PC-9 (cell line): ENCODE measurements at regions of chr13 and their contacts with region 1.

Region 1: DNA sequence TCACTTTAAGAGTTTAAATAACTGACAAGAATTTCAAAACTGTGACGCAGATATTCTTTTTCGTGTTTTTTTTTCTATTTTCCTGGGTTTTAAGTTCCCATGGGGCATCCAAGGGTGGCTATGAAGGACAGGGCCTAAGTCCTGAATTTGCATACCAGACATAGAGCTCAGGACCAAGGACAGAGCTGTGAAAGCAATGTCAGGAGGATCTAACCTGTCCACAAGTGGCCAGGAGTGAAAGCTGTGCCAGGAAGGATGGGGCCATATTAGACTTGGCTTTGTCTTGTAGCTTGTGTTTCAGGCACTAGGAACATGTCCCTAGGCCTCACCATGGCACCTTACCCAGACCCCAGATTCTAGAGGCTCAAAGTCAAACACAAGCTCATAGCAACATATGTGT is 289.4 kb upstream of the MIR17HG start:
- DNase-seq: no peak
- H3K4me3 ChIP-seq: no peak overlapping the region
- H3K27ac ChIP-seq: no peak overlapping the region
- H3K4me1 ChIP-seq: no peaks in the 10 kb centered on the region
- H3K27me3 ChIP-seq: no peaks in the 10 kb centered on the region
- CTCF ChIP-seq: no peak

Region 2: DNA sequence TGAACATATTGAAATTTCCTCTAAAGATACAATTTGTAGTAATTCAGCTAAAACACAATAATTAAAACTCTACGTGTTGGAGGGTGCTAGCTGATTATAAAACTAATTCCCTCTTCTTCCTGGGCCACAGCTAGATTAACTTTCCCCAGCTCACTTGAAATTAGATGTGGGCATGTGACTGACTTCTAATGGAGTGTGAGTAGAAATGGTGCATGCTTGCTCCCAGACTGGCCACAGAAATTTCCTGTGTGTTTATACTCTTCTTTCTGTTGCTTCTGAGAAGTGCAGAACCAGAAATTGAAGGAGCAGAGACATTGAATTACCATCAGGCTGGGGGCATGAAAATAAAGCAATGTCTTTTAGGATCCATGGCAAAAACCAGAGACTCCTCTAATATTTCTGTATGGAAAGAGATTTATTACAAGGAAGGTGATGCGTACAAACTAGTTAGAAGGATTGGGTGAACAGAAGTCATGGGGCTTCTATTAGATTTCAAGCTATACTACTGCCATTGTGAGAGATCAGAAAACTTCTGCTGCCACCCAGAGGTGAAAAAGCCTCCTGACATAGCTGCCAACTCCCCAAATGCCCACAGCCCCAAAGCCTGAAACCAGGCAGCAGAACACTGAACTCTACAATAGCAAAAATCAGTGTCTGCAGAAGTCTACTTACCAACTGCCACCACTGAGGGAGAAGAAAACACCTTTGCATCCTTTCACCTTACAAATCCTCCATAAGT is 89.7 kb before region 1 on chr13:
- CTCF ChIA-PET with region 1: no interaction called
- POLR2A ChIA-PET with region 1: interaction called, 11 read pairs
- intact Hi-C with region 1: no loop called
- DNase-seq: peak in 1 of 2 experiments; percentile 22
- H3K4me3 ChIP-seq: no peak overlapping the region
- H3K27ac ChIP-seq: no peak overlapping the region
- H3K4me1 ChIP-seq: no peaks in the 10 kb centered on the region
- H3K27me3 ChIP-seq: no peaks in the 10 kb centered on the region
- CTCF ChIP-seq: peak; percentile 51